Aorta (tissue), 5 donors: ENCODE measurements at regions of chr4 and their contacts with region 1.

Region 1: GRCh38 chr4:120718979-120719566 is 203.5 kb downstream of the PRDM5 start:
- DNase-seq: no peak
- ATAC-seq: peak; percentile 85
- H3K4me3 ChIP-seq: no peak overlapping the region
- H3K27ac ChIP-seq: no peak overlapping the region
- H3K4me1 ChIP-seq: no peaks in the 10 kb centered on the region
- H3K27me3 ChIP-seq: no peaks in the 10 kb centered on the region

Region 2: GRCh38 chr4:120517966-120518365 is 201.1 kb before region 1 on chr4:
- intact Hi-C with region 1: no loop called
- DNase-seq: no peak
- ATAC-seq: peak; percentile 85
- H3K4me3 ChIP-seq: no peak overlapping the region
- H3K27ac ChIP-seq: no peak overlapping the region
- H3K4me1 ChIP-seq: no peaks in the 10 kb centered on the region
- H3K27me3 ChIP-seq: no peaks in the 10 kb centered on the region

Region 3: GRCh38 chr4:120730777-120731320 is 11.8 kb after region 1 on chr4:
- intact Hi-C with region 1: loop called in 1 of 2 experiments (anchors 1 kb)
- DNase-seq: no peak
- ATAC-seq: no peak
- H3K4me3 ChIP-seq: no peak overlapping the region
- H3K27ac ChIP-seq: no peak overlapping the region
- H3K4me1 ChIP-seq: no peaks in the 10 kb centered on the region
- H3K27me3 ChIP-seq: no peaks in the 10 kb centered on the region

Region 4: GRCh38 chr4:121096629-121097028 is 377.6 kb after region 1 on chr4:
- intact Hi-C with region 1: loop called (anchors 10 kb)
- DNase-seq: no peak
- ATAC-seq: no peak
- H3K4me3 ChIP-seq: no peak overlapping the region
- H3K27ac ChIP-seq: no peak overlapping the region
- H3K4me1 ChIP-seq: no peaks in the 10 kb centered on the region
- H3K27me3 ChIP-seq: no peaks in the 10 kb centered on the region